Spleen (tissue), 13 donors: ENCODE measurements at regions of chr2 and their contacts with region 1.

Region 1: GRCh38 chr2:113198790-113199612 is 25.2 kb downstream of the PSD4 start:
- DNase-seq: peak; percentile 96
- H3K4me3 ChIP-seq: peak overlapping the region; percentile 49 to 76 (median 59)
- H3K27ac ChIP-seq: peak overlapping the region; percentile 1 to 83 (median 72)
- H3K4me1 ChIP-seq: peaks cover 3 to 29% (median 17%) of the 10 kb centered on the region in 6 donors
- H3K27me3 ChIP-seq: no peaks in the 10 kb centered on the region
- CTCF ChIP-seq: peak; percentile 80 to 99 (median 96)
- POLR2A ChIP-seq: no peak

Region 2: DNA sequence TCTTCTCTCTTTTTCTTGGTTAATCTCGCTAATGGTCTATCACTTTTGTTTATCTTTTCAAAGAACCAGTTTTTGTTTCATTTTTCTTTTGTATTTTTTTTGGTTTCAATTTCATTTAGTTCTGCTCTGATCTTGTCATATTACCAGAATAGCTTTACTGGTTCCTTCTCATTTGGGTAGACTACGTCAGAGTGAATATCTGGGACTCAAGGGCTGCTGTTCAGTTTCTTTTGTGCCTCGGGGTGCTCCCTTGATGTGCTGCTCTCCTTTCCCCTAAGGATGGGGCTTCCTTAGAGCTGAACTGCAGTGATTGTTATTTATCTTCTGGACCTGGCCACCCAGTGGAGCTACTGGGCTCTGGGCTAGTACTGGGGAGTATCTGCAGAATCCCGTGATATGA is 101.0 kb before region 1 on chr2:
- intact Hi-C with region 1: no loop called
- DNase-seq: no peak
- H3K4me3 ChIP-seq: peak overlapping the region in 1 of 8 donors; percentile 32
- H3K27ac ChIP-seq: peak overlapping the region in 3 of 8 donors; percentile 30 to 50 (median 47)
- H3K4me1 ChIP-seq: peaks cover 0 to 12% (median 0%) of the 10 kb centered on the region in 6 donors
- H3K27me3 ChIP-seq: no peaks in the 10 kb centered on the region
- CTCF ChIP-seq: no peak
- POLR2A ChIP-seq: no peak

Region 3: GRCh38 chr2:113138428-113139322 is 60.3 kb before region 1 on chr2:
- intact Hi-C with region 1: loop called (anchors 5 kb)
- DNase-seq: no peak
- H3K4me3 ChIP-seq: peak overlapping the region in 1 of 8 donors; percentile 29
- H3K27ac ChIP-seq: peak overlapping the region in 3 of 8 donors; percentile 37 to 40 (median 37)
- H3K4me1 ChIP-seq: peaks cover 0 to 25% (median 9%) of the 10 kb centered on the region in 6 donors
- H3K27me3 ChIP-seq: no peaks in the 10 kb centered on the region
- CTCF ChIP-seq: peak; percentile 82 to 93 (median 85)
- POLR2A ChIP-seq: no peak